OCI-LY7 (cell line): ENCODE measurements at regions of chr19 and their contacts with region 1.

Region 1: GRCh38 chr19:18588611-18589379 is at the start of gene REX1BD:
- DNase-seq: peak; percentile 94
- H3K4me3 ChIP-seq: peak within 1 kb of the TSS; percentile 68
- H3K27ac ChIP-seq: peak within 1 kb of the TSS; percentile 70
- H3K4me1 ChIP-seq: peaks cover 51% of the 10 kb centered on the region
- CTCF ChIP-seq: peak; percentile 92
- total RNA-seq, gene REX1BD: 122 and 126 TPM in 2 replicates

Region 2: DNA sequence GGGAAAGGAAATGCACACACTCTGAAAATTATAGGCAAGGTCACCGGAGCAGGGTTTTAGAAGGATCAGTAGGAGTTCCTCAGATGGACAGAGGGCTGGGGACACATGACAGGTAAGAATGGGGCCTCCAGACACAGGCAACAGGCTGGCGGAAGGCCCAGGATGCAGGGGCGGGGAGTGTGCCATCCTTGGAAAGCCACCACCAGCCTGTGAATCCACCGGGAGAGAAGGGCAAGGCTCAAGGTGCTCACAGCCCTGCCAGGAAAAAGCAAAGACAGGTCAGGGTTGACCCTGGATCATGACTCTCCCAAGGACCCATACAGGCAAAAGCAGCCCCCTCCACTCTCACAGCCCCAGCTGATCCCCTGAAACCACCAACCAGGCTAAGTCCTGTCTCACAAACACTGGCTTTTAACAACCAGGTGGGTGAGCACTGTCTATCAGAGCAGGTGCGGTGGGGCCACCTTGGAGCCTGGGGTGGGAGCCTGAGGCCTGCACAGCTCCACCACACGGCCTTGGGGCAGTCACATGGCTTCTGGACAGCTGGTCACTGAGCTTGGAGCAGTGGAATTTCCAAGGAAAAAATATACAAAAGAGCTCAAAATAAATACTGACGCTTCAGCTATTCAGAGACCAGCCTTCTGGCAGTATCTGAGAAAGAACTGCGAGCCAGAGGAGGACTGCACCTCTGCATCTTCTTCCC is 115.6 kb before region 1 on chr19:
- CTCF ChIA-PET with region 1: interaction called, 8 read pairs
- POLR2A ChIA-PET with region 1: no interaction called
- intact Hi-C with region 1: loop called (anchors 5 kb)
- DNase-seq: no peak
- H3K4me3 ChIP-seq: no peak overlapping the region
- H3K27ac ChIP-seq: no peak overlapping the region
- H3K4me1 ChIP-seq: peaks cover 3% of the 10 kb centered on the region
- CTCF ChIP-seq: no peak

Region 3: DNA sequence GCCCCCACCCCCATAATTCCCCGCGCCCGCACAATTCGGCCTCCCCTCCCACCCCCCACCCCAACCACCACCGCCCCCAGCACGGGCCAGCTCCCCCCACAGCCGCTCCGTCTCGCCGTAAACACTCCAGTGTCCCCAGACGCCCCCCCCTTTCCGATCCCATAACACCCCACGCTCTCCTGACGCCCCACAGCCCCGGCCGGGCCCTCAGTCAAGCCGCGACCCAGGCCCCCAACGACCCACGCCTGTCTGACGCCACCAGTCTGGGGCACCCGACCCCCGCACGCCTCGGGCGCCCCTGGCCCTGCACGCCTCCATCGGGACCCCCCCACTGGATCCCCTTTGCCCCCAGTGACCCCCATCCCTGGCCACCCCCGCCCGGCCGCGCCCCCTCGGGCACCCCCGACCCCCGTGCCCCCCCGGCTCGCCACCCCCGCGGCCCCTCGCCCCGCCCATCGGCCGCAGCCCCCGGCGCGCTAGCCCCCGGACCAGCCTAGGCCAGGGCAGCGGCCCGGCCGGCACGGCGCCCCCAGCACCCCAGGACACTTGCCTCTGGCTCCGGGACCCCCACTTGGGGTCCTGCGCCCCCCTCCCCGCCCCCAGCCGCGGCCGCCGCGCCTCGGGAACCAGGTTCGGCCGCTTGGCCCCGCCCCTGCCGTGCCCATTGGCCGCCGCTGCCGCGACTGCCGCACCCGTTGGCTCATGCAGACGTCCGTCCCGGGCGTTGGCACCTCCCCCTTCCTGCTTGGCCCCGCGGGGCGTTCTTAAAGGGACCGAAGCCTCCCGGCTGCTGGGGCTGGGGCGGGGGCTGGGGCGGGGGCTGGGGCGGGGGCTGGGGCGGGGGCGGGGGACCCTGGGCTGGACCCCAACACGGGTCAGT is 45.6 kb before region 1 on chr19 and contains the start of gene FKBP8:
- CTCF ChIA-PET with region 1: interaction called, 3 read pairs
- POLR2A ChIA-PET with region 1: interaction called, 5 read pairs
- intact Hi-C with region 1: loop called (anchors 2 kb)
- DNase-seq: peak; percentile 94
- H3K4me3 ChIP-seq: peak within 1 kb of the TSS; percentile 76
- H3K27ac ChIP-seq: peak within 1 kb of the TSS; percentile 54
- H3K4me1 ChIP-seq: peaks cover 19% of the 10 kb centered on the region
- CTCF ChIP-seq: no peak
- total RNA-seq, gene FKBP8: 159 and 200 TPM in 2 replicates

Region 4: DNA sequence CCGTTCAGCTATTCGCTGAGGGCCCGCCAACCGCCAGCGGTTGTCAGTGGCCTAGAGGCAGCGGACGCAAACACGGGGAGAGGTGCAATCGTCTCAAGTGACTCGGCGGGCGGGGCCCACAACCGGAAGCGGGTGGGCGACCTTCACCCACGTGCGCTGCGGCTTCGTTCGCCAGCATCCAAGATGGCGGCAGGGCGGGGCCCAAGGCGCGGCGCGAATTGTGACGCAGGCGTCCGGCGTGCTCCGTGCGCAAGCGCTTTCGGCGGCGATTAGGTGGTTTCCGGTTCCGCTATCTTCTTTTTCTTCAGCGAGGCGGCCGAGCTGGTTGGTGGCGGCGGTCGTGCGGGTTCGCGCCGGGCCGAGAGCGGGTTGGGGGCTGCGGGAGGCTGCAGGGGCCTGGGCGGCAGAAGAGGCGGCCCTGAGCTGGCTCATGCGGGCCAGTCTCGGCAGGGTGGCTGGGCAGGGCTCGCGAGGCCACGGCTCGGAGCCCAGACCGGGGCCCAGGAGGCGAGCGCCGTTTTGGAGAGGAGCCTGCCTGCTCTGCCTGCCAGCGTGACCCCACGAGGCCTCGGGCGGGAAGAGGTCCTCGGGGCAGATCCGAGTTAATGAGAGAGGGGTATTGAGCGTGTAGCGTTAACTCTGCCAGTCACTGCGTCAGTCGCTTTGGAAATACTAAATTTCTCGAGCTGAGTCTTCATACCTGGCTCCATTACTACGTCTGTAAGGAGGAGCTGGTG is 17.1 kb before region 1 on chr19 and contains the start of gene UBA52:
- CTCF ChIA-PET with region 1: no interaction called
- POLR2A ChIA-PET with region 1: interaction called, 23 read pairs
- intact Hi-C with region 1: no loop called
- DNase-seq: peak; percentile 99
- H3K4me3 ChIP-seq: peak within 1 kb of the TSS; percentile 82
- H3K27ac ChIP-seq: peak within 1 kb of the TSS; percentile 75
- H3K4me1 ChIP-seq: peaks cover 19% of the 10 kb centered on the region
- CTCF ChIP-seq: no peak
- total RNA-seq, gene UBA52: 1,188 and 1,580 TPM in 2 replicates

Region 5: DNA sequence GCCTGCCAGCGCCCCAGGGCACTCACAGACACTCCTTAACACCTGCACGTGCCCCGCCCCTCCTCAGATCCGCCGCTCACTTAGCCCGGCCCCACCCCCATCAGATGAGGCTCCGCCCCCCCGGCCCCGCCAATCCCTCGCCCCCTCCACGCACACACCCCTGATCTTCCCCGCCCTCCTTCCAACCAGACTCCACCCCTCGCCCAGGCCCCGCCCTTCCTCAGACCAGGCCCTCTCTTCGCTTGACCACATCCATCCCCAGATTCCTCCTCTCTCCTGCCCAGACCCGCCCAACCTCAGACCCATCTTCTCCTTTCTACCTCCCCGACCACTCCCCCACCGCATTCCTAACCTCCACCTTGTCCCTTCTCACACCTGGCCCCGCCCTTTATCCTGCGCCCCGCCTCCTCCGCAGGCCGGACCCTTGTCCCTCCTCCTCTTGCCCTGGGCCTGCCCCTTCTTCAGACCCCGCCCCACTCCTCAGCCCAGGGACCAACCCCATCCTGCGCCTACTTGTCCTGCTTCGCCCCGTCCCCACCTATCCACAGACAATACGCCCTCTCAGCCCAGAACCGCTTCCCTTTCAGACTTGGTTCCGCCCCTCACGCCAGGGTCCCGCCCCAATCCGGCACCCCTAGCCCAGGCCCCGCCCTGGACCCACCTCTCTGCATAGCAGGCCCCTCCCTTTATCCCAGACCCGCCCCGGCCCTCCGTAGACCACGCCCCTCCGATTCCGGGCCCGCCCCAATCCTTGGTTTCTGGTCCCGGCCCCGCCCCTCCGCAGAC is 47.6 kb after region 1 on chr19:
- CTCF ChIA-PET with region 1: no interaction called
- POLR2A ChIA-PET with region 1: no interaction called
- intact Hi-C with region 1: loop called (anchors 2 kb)
- DNase-seq: peak; percentile 95
- H3K4me3 ChIP-seq: peak overlapping the region; percentile 73
- H3K27ac ChIP-seq: peak overlapping the region; percentile 17
- H3K4me1 ChIP-seq: peaks cover 19% of the 10 kb centered on the region
- CTCF ChIP-seq: no peak

Region 6: DNA sequence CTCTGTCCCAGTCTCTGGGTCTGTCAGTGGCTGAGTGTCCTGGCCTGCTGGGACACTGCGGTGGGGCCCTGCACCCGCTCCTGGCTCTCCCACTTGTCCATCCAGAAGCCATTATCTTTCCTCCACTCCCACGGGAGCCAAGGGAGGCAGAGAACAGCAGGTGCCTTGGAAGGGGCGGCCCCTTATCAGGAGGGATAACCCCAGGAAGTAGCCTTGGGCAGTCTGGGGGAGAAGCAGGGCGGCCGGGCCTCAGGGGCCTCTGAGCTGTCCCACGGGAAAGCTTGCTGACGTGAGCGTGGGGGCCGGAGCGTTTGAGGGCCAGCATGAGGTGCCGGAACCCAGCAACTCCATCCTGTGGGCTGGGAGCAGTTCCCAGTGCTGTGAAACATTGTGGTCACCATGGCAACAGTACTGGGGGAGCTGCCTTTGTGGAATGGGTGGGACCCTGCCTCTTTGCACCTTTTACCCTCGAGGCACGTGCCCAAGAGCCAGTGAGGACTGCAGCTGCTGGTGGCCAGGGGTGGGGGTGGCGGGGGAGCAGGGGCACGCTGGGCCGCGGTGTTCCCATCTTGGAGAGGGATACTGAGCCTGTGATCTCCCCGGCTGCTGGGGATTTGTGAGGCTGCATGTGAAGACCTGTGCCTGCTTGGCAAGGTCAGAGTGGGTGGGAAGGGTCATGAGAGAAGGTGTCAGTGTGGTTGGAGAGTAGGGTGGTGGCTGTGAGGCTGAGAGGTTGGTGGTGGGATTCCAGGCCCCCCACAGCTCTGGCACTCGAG is 69.0 kb after region 1 on chr19:
- CTCF ChIA-PET with region 1: no interaction called
- POLR2A ChIA-PET with region 1: no interaction called
- intact Hi-C with region 1: no loop called
- DNase-seq: no peak
- H3K4me3 ChIP-seq: no peak overlapping the region
- H3K27ac ChIP-seq: no peak overlapping the region
- H3K4me1 ChIP-seq: no peaks in the 10 kb centered on the region
- CTCF ChIP-seq: no peak

Region 7: DNA sequence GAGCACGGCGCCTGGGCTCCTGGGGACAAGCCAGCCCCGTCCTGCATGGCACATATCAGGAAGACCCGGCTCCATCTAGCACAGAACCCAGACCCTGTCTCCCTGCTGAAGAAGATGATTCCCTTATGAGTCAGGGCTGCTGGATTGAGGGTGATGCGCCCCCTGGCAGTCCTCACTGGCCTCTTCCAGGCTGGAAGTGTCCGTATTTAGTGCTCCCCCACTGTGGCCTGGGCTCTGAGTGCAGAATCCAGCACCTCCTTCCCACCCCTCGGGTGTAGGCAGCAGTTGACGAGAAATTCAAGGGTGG is 187.4 kb after region 1 on chr19:
- CTCF ChIA-PET with region 1: no interaction called
- POLR2A ChIA-PET with region 1: no interaction called
- intact Hi-C with region 1: no loop called
- DNase-seq: no peak
- H3K4me3 ChIP-seq: no peak overlapping the region
- H3K27ac ChIP-seq: no peak overlapping the region
- H3K4me1 ChIP-seq: no peaks in the 10 kb centered on the region
- CTCF ChIP-seq: no peak

Region 8: DNA sequence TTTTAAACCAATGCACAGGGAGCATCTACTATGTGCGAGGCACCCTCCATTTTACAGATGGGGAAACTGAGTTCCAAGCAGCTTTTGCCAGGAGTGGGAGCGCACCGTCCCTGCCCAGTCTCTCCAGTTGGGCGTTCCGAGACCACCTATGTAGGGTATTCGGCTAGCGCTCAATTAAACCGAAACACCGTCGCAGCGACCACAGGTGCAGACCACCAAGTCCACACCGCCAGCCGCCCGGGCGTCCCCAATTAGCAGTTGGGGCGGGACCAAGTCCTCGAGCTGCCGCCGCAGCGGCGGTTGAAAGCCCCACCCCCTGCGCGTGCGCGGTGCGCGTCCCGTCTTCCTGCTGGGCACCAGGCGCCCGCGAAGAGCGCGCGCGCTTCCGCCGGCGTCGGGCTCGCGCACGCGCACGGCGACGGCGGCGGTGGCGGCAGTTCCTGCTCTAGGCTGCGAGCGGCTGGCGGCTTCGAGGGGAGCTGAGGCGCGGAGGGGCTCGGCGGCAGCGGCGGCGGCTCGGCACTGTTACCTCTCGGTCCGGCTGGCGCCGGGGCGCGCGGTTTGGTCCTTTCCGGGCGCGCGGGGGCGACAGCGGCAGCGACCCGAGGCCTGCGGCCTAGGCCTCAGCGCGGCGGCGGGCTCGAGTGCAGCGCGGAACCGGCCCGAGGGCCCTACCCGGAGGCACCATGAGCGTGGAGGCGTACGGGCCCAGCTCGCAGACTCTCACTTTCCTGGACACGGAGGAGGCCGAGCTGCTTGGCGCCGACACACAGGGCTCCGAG is 242.9 kb after region 1 on chr19 and contains the start of gene UPF1:
- CTCF ChIA-PET with region 1: no interaction called
- POLR2A ChIA-PET with region 1: no interaction called
- intact Hi-C with region 1: loop called (anchors 5 kb)
- DNase-seq: peak; percentile 98
- H3K4me3 ChIP-seq: peak within 1 kb of the TSS; percentile 94
- H3K27ac ChIP-seq: peak within 1 kb of the TSS; percentile 72
- H3K4me1 ChIP-seq: peaks cover 26% of the 10 kb centered on the region
- CTCF ChIP-seq: no peak
- total RNA-seq, gene UPF1: 65.2 and 77.2 TPM in 2 replicates